Vagina (tissue), 2 donors: ENCODE measurements at regions of chr3 and their contacts with region 1.

Region 1: DNA sequence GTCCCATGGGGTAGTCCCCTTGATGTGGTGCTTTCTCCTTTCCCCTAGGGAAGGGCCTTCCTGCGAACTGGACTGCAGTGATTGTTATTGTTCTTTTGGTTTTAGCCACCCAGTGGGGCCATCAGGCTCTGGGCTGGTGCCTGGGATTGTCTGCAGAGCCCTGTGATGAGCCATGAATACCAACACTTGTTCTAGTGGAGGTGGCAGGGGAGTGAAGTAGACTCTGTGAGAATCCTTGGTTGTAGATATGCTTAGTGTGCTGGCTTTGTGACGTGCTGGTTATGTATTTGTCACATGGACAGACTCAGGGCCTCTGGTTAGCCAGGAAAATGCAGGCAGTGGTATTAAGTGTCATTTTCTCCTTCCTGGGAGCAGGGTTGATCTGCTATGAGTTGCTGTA is 51.8 kb upstream of the NDUFB4 start:
- DNase-seq: no peak
- H3K4me3 ChIP-seq: no peak overlapping the region
- H3K27ac ChIP-seq: no peak overlapping the region
- H3K4me1 ChIP-seq: no peaks in the 10 kb centered on the region
- H3K27me3 ChIP-seq: no peaks in the 10 kb centered on the region
- CTCF ChIP-seq: no peak
- POLR2A ChIP-seq: no peak

Region 2: GRCh38 chr3:119184796-119185570 is 1359.4 kb before region 1 on chr3:
- intact Hi-C with region 1: no loop called
- DNase-seq: no peak
- H3K4me3 ChIP-seq: no peak overlapping the region
- H3K27ac ChIP-seq: no peak overlapping the region
- H3K4me1 ChIP-seq: no peaks in the 10 kb centered on the region
- H3K27me3 ChIP-seq: no peaks in the 10 kb centered on the region
- CTCF ChIP-seq: no peak
- POLR2A ChIP-seq: no peak

Region 3: DNA sequence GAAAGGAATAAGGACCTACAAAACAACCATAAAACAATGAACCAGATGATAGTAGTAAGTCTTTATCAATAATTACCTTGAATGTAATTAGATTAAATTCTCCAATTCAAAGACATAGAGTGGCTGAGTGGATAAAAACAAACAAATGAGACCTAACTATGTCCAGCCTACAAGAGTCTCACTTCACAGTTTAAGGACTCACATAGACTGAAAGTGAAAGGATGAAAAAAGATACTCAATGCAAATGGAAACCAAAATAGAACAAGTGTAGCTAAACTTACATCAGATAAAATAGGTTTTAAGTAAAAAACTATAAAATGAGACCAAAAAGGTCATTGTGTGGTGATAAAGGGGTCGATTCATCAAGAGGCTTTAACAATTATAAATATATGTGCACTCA is 784.4 kb before region 1 on chr3:
- intact Hi-C with region 1: loop called (anchors 5 kb)
- DNase-seq: no peak
- H3K4me3 ChIP-seq: no peak overlapping the region
- H3K27ac ChIP-seq: no peak overlapping the region
- H3K4me1 ChIP-seq: no peaks in the 10 kb centered on the region
- H3K27me3 ChIP-seq: no peaks in the 10 kb centered on the region
- CTCF ChIP-seq: no peak
- POLR2A ChIP-seq: no peak

Region 4: DNA sequence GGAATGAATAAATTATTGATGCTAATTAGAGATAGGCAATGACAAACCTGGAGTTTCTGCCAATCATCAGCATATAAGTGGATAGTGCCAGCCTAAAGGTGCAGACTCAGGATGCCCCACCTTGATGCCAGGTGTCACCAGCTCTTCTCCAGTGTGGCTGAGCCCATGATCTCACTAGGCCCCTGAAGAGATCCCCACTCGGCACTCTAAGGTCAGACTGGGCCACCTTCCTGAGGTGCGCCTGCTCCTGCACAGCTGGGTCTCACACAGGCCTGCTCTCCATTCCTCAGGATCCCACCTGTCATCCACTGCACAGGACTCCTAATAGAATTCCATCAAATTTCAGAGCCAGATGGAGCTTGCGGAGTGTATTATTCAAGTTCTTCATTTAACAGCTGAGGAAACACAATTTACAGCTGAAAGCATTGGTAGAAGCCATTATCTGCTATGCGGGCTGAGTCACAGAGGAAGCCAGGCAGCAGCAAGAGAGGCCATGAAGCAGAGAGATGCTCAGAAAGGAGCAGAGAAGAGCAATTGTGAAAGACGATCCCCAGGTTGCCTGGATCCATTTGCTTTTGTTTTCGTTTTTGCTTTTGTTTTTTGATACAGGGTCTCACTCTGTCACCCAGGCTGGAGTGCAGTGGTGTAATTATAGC is 68.5 kb before region 1 on chr3:
- intact Hi-C with region 1: no loop called
- DNase-seq: peak in 1 of 2 donors; percentile 62
- H3K4me3 ChIP-seq: no peak overlapping the region
- H3K27ac ChIP-seq: no peak overlapping the region
- H3K4me1 ChIP-seq: no peaks in the 10 kb centered on the region
- H3K27me3 ChIP-seq: no peaks in the 10 kb centered on the region
- CTCF ChIP-seq: no peak
- POLR2A ChIP-seq: no peak

Region 5: DNA sequence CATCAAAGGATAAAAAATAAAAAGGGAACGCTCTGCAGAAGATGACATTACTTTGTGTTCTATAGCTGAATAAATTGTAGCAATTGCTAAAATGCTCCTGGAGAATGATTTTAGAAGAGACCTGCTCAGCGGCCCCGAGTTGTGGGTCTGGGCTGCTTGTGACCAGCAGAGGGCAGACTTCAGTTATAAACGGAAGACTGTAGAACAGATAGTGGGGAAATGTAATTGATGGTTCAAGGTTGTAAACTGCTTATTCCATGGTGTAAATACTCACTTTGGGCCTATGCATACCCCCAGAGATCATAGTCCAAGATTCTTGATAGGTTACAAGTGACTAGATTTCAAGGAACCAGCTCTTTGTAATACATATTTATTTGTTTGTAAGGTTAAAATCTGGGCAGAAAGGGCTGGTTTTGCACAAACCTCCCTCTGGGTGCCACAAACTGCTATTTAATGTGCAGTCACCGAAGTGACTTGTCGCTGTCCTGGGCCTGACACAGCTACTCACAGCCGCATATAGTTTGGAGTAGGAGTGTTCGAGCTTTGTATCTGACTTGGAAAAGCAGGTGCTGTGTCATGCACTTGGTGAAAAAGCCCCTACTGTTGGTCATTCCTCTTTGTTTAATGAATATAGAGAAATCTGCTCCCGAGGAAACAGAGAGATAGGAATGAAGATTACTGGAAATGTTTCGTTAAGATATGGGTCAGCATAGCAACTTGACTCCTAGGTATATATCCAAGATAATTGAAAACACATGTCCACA is 17.1 kb after region 1 on chr3:
- intact Hi-C with region 1: no loop called
- DNase-seq: no peak
- H3K4me3 ChIP-seq: no peak overlapping the region
- H3K27ac ChIP-seq: no peak overlapping the region
- H3K4me1 ChIP-seq: peaks cover 21% of the 10 kb centered on the region
- H3K27me3 ChIP-seq: no peaks in the 10 kb centered on the region
- CTCF ChIP-seq: peak; percentile 54 to 75 (median 75)
- POLR2A ChIP-seq: no peak